Naive thymus-derived CD4-positive, alpha-beta T cell (primary cell): ENCODE measurements at regions of chr10 and their contacts with region 1.

Region 1: GRCh38 chr10:23994479-23995046 is 214.4 kb upstream of the KIAA1217 start:
- DNase-seq: peak in 2 of 9 donors; percentile 1 to 33
- ATAC-seq: no peak
- H3K4me3 ChIP-seq: no peak overlapping the region
- H3K4me3 Mint-ChIP-seq: no peak overlapping the region
- H3K27ac ChIP-seq: no peak overlapping the region
- H3K27ac Mint-ChIP-seq: no peak overlapping the region
- H3K4me1 ChIP-seq: no peaks in the 10 kb centered on the region
- H3K4me1 Mint-ChIP-seq: no peaks in the 10 kb centered on the region
- H3K27me3 ChIP-seq: no peaks in the 10 kb centered on the region
- H3K27me3 Mint-ChIP-seq: peaks cover 3 to 7% (median 5%) of the 10 kb centered on the region in 5 donors

Region 2: GRCh38 chr10:24360282-24361127 is 365.9 kb after region 1 on chr10:
- CTCF ChIA-PET with region 1: no interaction called
- POLR2A ChIA-PET with region 1: no interaction called
- intact Hi-C with region 1: loop called in 1 of 2 experiments (anchors 2 kb)
- DNase-seq: peak in 1 of 9 donors; percentile 32
- ATAC-seq: no peak
- H3K4me3 ChIP-seq: no peak overlapping the region
- H3K4me3 Mint-ChIP-seq: no peak overlapping the region
- H3K27ac ChIP-seq: no peak overlapping the region
- H3K27ac Mint-ChIP-seq: peak overlapping the region in 1 of 9 donors; percentile 32
- H3K4me1 ChIP-seq: no peaks in the 10 kb centered on the region
- H3K4me1 Mint-ChIP-seq: no peaks in the 10 kb centered on the region
- H3K27me3 ChIP-seq: no peaks in the 10 kb centered on the region
- H3K27me3 Mint-ChIP-seq: peaks cover 0 to 19% (median 7%) of the 10 kb centered on the region in 5 donors

Region 3: DNA sequence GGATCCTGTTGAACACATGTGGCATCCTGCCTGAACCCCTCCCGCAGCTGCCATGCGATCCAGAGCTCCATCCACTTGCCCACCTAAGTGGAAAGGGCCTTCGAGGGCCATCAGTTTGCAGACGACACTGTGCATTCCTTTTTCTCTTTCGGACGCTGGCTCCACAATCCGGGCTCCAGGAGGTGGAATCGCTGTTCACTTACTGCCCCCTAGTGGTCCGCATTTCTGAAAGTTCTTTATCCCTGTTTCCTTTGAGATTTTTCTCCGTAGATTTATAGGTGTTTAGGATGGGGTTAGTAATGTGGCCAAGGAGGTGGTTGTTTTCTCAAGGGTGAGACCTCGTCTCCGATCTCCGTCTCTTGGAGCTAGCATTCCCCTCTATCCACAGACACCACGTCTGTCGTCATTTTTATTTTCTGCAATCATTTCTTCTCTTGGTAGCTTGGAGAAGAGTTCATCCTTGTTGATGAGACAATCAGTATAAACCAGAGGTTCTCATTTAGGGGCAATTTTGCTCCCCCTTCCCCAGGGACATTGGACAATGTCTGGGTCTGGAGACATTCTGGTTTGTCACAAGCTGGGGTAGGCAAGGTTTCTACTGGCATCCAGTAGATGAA is 524.5 kb after region 1 on chr10:
- CTCF ChIA-PET with region 1: no interaction called
- POLR2A ChIA-PET with region 1: no interaction called
- intact Hi-C with region 1: loop called in 1 of 2 experiments (anchors 1 kb)
- DNase-seq: peak in 4 of 9 donors; percentile 5 to 42 (median 12)
- ATAC-seq: no peak
- H3K4me3 ChIP-seq: peak overlapping the region; percentile 38
- H3K4me3 Mint-ChIP-seq: peak overlapping the region; percentile 6 to 84 (median 77)
- H3K27ac ChIP-seq: no peak overlapping the region
- H3K27ac Mint-ChIP-seq: peak overlapping the region in 4 of 9 donors; percentile 7 to 90 (median 20)
- H3K4me1 ChIP-seq: no peaks in the 10 kb centered on the region
- H3K4me1 Mint-ChIP-seq: peaks cover 6 to 16% (median 14%) of the 10 kb centered on the region in 7 donors
- H3K27me3 ChIP-seq: no peaks in the 10 kb centered on the region
- H3K27me3 Mint-ChIP-seq: peaks cover 0 to 13% (median 0%) of the 10 kb centered on the region in 5 donors

Region 4: DNA sequence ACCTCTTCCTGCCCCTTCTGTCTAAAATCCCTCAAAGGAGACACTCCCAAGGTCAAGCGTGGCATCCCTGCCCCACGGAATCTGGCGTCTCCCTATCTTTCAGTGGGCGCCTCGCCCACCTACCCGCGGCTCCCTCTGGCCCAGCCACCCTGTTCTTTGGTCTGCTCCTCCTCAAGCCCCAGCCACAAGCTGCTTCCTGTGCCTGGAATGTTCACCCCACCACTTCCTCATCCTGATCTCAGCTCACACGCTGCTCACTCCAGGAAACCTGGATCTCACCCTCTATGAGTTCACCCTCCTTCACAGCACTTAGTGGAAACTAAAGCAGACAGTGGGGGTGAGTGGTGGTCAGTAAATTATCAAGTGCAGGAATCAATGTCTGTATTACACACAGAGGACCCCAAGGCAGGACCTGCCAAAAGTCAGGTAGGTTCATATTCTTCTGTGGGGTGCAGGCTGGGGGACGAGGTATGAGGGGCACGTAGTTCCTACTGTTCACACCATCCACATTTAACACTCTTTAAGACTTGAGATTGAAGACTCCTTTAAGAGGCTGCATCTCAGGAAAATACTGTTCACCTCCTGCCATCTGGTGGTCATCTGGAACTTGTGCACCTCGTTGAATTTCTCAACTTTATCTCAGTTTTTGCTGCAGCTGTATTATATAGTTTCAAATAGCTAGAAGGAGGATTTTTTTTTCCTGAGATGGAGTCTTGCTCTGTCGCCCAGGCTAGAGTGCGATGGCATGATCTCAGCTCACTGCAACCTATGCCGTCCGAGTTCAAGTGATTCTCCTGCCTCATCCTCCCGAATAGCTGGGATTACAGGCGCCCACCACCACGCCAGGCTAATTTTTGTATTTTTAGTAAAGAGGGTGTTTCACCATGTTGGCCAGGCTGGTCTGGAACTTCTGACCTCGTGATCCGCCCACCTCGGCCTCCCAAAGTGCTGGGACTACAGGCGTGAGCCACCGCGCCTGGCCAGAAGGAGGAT is 562.5 kb after region 1 on chr10:
- CTCF ChIA-PET with region 1: no interaction called
- POLR2A ChIA-PET with region 1: no interaction called
- intact Hi-C with region 1: loop called (anchors 2 to 5 kb)
- DNase-seq: peak in 7 of 9 donors; percentile 8 to 59 (median 39)
- ATAC-seq: peak; percentile 46
- H3K4me3 ChIP-seq: no peak overlapping the region
- H3K4me3 Mint-ChIP-seq: no peak overlapping the region
- H3K27ac ChIP-seq: no peak overlapping the region
- H3K27ac Mint-ChIP-seq: peak overlapping the region in 2 of 9 donors; percentile 19 to 75
- H3K4me1 ChIP-seq: no peaks in the 10 kb centered on the region
- H3K4me1 Mint-ChIP-seq: peaks cover 4 to 7% (median 7%) of the 10 kb centered on the region in 7 donors
- H3K27me3 ChIP-seq: no peaks in the 10 kb centered on the region
- H3K27me3 Mint-ChIP-seq: no peaks in the 10 kb centered on the region

Region 5: GRCh38 chr10:24680647-24681524 is 686.3 kb after region 1 on chr10:
- CTCF ChIA-PET with region 1: no interaction called
- POLR2A ChIA-PET with region 1: no interaction called
- intact Hi-C with region 1: no loop called
- DNase-seq: no peak
- ATAC-seq: no peak
- H3K4me3 ChIP-seq: no peak overlapping the region
- H3K4me3 Mint-ChIP-seq: no peak overlapping the region
- H3K27ac ChIP-seq: no peak overlapping the region
- H3K27ac Mint-ChIP-seq: no peak overlapping the region
- H3K4me1 ChIP-seq: no peaks in the 10 kb centered on the region
- H3K4me1 Mint-ChIP-seq: peaks cover 0 to 9% (median 0%) of the 10 kb centered on the region in 7 donors
- H3K27me3 ChIP-seq: no peaks in the 10 kb centered on the region
- H3K27me3 Mint-ChIP-seq: no peaks in the 10 kb centered on the region